Left colon (tissue), 2 donors: ENCODE measurements at regions of chr15 and their contacts with region 1.

Region 1: GRCh38 chr15:33737687-33738601 is 230.4 kb upstream of the CHRM5 start:
- DNase-seq: peak in 1 of 2 donors; percentile 18
- ATAC-seq: peak; percentile 64

Region 2: GRCh38 chr15:33671456-33671855 is 66.5 kb before region 1 on chr15:
- intact Hi-C with region 1: no loop called
- DNase-seq: no peak
- ATAC-seq: no peak

Region 3: GRCh38 chr15:33963831-33964664 is 226.1 kb after region 1 on chr15:
- intact Hi-C with region 1: loop called in 1 of 2 experiments (anchors 10 kb)
- DNase-seq: no peak
- ATAC-seq: peak; percentile 34

Region 4: DNA sequence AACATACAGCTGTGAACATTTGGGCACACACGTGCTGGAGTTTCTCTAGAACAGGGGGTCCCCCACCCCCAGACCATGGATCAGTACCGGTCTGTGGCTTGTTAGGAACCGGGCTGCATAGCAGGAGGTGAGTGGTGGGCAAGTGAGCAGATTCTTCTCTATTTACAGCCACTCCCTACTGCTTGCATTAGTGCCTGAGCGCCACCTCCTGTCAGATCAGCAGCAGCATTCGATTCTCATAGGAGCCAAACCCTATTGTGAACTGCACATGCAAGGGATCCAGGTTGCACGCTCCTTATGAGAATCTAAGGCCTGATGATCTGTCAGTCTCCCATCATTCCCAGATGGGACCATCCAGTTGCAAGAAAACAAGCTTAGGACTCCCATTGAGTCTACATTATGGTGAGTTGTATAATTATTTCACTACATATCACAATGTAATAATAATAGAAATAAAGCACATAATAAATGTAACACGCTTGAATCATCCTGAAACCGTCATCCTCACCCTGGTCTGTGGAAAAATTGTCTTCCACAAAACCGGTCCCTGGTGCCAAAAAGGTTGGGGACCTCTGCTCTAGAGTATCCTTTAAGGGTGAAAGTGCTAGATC is 256.2 kb after region 1 on chr15:
- intact Hi-C with region 1: loop called in 1 of 2 experiments (anchors 10 kb)
- DNase-seq: peak in 1 of 2 donors; percentile 6
- ATAC-seq: no peak